Dorsolateral prefrontal cortex (tissue), 120 donors: ENCODE measurements at regions of chr3 and their contacts with region 1.

Region 1: GRCh38 chr3:46976326-46977190 is at the start of gene CCDC12:
- DNase-seq: peak; percentile 93 to 99 (median 97)
- H3K4me3 ChIP-seq: peak within 1 kb of the TSS; percentile 54 to 98 (median 86)
- H3K27ac ChIP-seq: peak within 1 kb of the TSS; percentile 77 to 99 (median 95)
- H3K27me3 ChIP-seq: no peaks in the 10 kb centered on the region
- CTCF ChIP-seq: peak in 17 of 56 donors; percentile 6 to 38 (median 19)
- total RNA-seq, gene CCDC12: 30.9 to 54.9 (median 40.5) TPM

Region 2: GRCh38 chr3:46705022-46705530 is 271.5 kb before region 1 on chr3:
- intact Hi-C with region 1: loop called in 1 of 2 experiments (anchors 10 kb)
- DNase-seq: peak; percentile 57 to 86 (median 80)
- H3K4me3 ChIP-seq: no peak overlapping the region
- H3K27ac ChIP-seq: no peak overlapping the region
- H3K27me3 ChIP-seq: peaks cover 0 to 5% (median 0%) of the 10 kb centered on the region in 45 donors
- CTCF ChIP-seq: peak; percentile 86 to 100 (median 97)

Region 3: DNA sequence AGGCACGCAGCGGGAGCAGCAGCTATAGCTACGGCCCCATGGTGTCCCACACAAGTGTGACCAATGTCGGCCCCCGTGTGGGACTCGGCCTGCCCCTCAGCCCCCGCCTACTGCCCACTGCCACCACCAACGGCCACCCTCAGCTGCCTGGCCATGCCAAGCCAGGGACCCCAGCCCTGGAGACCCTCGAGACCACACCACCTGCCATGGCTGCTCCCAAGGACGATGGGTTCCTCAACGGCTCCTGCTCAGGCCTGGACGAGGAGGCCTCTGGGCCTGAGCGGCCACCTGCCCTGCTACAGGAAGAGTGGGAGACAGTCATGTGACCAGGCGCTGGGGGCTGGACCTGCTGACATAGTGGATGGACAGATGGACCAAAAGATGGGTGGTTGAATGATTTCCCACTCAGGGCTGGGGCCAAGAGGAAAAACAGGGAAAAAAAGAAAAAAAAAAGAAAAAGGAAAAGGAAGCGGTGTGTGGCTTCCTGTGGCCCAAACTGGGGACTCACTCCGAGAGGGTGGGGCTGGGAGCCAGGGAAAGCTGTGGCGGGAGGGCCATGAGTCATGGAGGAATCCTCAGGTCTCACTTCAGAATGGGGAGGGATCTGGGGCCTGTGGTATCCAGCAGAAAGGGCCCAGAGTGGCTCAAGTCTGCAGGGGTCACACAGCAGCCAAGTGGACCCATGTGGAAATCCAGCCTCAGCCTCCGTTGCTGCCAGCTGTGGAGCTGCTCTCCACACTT is 73.1 kb before region 1 on chr3:
- intact Hi-C with region 1: no loop called
- DNase-seq: peak in 1 of 10 donors; percentile 43
- H3K4me3 ChIP-seq: no peak overlapping the region
- H3K27ac ChIP-seq: no peak overlapping the region
- H3K27me3 ChIP-seq: no peaks in the 10 kb centered on the region
- CTCF ChIP-seq: no peak

Region 4: GRCh38 chr3:46923559-46924350 is 52.8 kb before region 1 on chr3:
- intact Hi-C with region 1: loop called in 1 of 2 experiments (anchors 5 kb)
- DNase-seq: peak in 5 of 10 donors; percentile 22 to 59 (median 42)
- H3K4me3 ChIP-seq: no peak overlapping the region
- H3K27ac ChIP-seq: peak overlapping the region in 1 of 59 donors; percentile 22
- H3K27me3 ChIP-seq: no peaks in the 10 kb centered on the region
- CTCF ChIP-seq: peak in 55 of 56 donors; percentile 22 to 80 (median 70)

Region 5: GRCh38 chr3:46935168-46935858 is 41.2 kb before region 1 on chr3:
- intact Hi-C with region 1: loop called in 1 of 2 experiments (anchors 5 kb)
- DNase-seq: peak in 5 of 10 donors; percentile 42 to 76 (median 55)
- H3K4me3 ChIP-seq: no peak overlapping the region
- H3K27ac ChIP-seq: peak overlapping the region in 37 of 59 donors; percentile 4 to 77 (median 44)
- H3K27me3 ChIP-seq: no peaks in the 10 kb centered on the region
- CTCF ChIP-seq: peak in 5 of 56 donors; percentile 6 to 35 (median 20)

Region 6: DNA sequence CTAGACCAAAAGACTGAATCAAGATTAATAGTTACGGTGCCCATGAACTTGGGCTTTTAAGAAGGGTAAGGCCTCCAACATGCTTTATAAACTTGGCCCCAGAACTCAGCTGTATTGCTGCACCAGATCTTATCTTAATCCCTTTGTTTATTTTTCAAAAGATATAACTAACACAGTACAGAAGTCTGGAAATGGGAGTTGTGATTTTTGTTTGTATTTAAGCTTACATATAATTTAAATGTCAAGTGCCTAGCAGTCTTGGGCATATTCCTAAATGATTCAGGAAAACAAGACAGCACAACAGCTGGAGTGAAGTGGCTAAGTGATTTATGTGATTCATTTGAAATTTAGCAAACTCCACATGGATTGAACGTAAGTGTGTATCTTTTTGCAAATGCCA is 59.1 kb after region 1 on chr3:
- intact Hi-C with region 1: no loop called
- DNase-seq: no peak
- H3K4me3 ChIP-seq: peak overlapping the region in 2 of 59 donors; percentile 17 to 23
- H3K27ac ChIP-seq: peak overlapping the region in 55 of 59 donors; percentile 12 to 86 (median 73)
- H3K27me3 ChIP-seq: no peaks in the 10 kb centered on the region
- CTCF ChIP-seq: no peak

Region 7: GRCh38 chr3:47164007-47164881 is 187.7 kb after region 1 on chr3 and contains the start of gene SETD2:
- intact Hi-C with region 1: loop called (anchors 2 to 5 kb)
- DNase-seq: peak; percentile 85 to 96 (median 92)
- H3K4me3 ChIP-seq: peak within 1 kb of the TSS; percentile 60 to 98 (median 90)
- H3K27ac ChIP-seq: peak within 1 kb of the TSS; percentile 79 to 98 (median 95)
- H3K27me3 ChIP-seq: no peaks in the 10 kb centered on the region
- CTCF ChIP-seq: peak in 45 of 56 donors; percentile 2 to 66 (median 30)
- total RNA-seq, gene SETD2: 44.4 to 82.4 (median 57.4) TPM

Region 8: GRCh38 chr3:47282424-47283192 is 306.1 kb after region 1 on chr3 and contains the starts of genes KIF9 and KLHL18:
- intact Hi-C with region 1: loop called (anchors 5 kb)
- DNase-seq: peak; percentile 89 to 95 (median 94)
- H3K4me3 ChIP-seq: peak within 1 kb of the TSS; percentile 68 to 99 (median 87)
- H3K27ac ChIP-seq: peak within 1 kb of the TSS; percentile 63 to 99 (median 94)
- H3K27me3 ChIP-seq: no peaks in the 10 kb centered on the region
- CTCF ChIP-seq: peak in 46 of 56 donors; percentile 14 to 70 (median 39)
- total RNA-seq, gene KIF9: 3.1 to 15.9 (median 8.8) TPM
- total RNA-seq, gene KLHL18: 19.8 to 62.3 (median 38.0) TPM